Naive thymus-derived CD4-positive, alpha-beta T cell (primary cell): ENCODE measurements at regions of chr5 and their contacts with region 1.

Region 1: DNA sequence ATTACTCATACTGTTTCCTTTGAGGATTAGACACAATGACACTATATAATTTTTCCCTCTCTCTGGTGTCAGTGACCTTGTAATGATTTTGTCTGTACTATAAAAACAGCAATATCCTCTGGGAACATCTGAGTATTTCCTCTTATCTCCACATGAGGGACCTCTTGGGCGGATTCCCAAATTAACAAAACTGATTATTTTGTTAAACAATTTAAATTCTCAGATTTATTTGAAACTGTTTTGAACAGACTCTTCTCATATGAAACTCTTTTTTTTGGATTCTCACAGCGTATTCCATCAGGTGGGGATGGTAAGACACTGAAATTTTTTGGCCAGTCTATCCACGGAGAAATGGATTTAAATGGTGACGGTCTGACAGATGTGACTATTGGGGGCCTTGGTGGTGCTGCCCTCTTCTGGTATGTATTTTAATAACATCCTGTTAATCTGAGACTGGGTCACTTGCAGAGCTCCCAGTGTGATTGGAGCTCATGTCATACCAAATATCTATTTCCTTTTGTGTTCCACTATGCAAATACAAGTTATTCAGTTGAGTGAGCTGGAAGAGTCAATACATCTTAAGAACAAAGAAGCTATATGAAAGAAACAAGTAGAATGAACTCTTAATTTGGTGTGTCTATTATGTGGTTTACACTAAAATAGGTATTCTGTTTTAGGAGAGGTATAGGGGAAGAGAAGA is 73.8 kb upstream of the ITGA2 start:
- DNase-seq: peak in 8 of 9 donors; percentile 30 to 77 (median 69)
- ATAC-seq: peak; percentile 97
- H3K4me3 ChIP-seq: no peak overlapping the region
- H3K4me3 Mint-ChIP-seq: peak overlapping the region in 9 of 10 donors; percentile 19 to 79 (median 73)
- H3K27ac ChIP-seq: no peak overlapping the region
- H3K27ac Mint-ChIP-seq: peak overlapping the region in 2 of 9 donors; percentile 10 to 30
- H3K4me1 ChIP-seq: no peaks in the 10 kb centered on the region
- H3K4me1 Mint-ChIP-seq: peaks cover 5 to 9% (median 8%) of the 10 kb centered on the region in 7 donors
- H3K27me3 ChIP-seq: no peaks in the 10 kb centered on the region
- H3K27me3 Mint-ChIP-seq: peaks cover 0 to 9% (median 0%) of the 10 kb centered on the region in 5 donors

Region 2: GRCh38 chr5:52657247-52657645 is 258.1 kb before region 1 on chr5:
- CTCF ChIA-PET with region 1: interaction called, 3 read pairs
- POLR2A ChIA-PET with region 1: no interaction called
- intact Hi-C with region 1: loop called (anchors 2 kb)
- DNase-seq: peak in 6 of 9 donors; percentile 14 to 61 (median 50)
- ATAC-seq: peak; percentile 57
- H3K4me3 ChIP-seq: no peak overlapping the region
- H3K4me3 Mint-ChIP-seq: no peak overlapping the region
- H3K27ac ChIP-seq: no peak overlapping the region
- H3K27ac Mint-ChIP-seq: no peak overlapping the region
- H3K4me1 ChIP-seq: no peaks in the 10 kb centered on the region
- H3K4me1 Mint-ChIP-seq: peaks cover 0 to 6% (median 0%) of the 10 kb centered on the region in 7 donors
- H3K27me3 ChIP-seq: no peaks in the 10 kb centered on the region
- H3K27me3 Mint-ChIP-seq: peaks cover 7 to 40% (median 11%) of the 10 kb centered on the region in 5 donors

Region 3: GRCh38 chr5:52665559-52665958 is 249.8 kb before region 1 on chr5:
- CTCF ChIA-PET with region 1: interaction called, 6 read pairs
- POLR2A ChIA-PET with region 1: no interaction called
- intact Hi-C with region 1: loop called (anchors 1 to 2 kb)
- DNase-seq: no peak
- ATAC-seq: no peak
- H3K4me3 ChIP-seq: no peak overlapping the region
- H3K4me3 Mint-ChIP-seq: no peak overlapping the region
- H3K27ac ChIP-seq: no peak overlapping the region
- H3K27ac Mint-ChIP-seq: peak overlapping the region in 1 of 9 donors; percentile 32
- H3K4me1 ChIP-seq: no peaks in the 10 kb centered on the region
- H3K4me1 Mint-ChIP-seq: peaks cover 0 to 15% (median 4%) of the 10 kb centered on the region in 7 donors
- H3K27me3 ChIP-seq: no peaks in the 10 kb centered on the region
- H3K27me3 Mint-ChIP-seq: peaks cover 0 to 33% (median 0%) of the 10 kb centered on the region in 5 donors

Region 4: GRCh38 chr5:52693280-52693679 is 222.0 kb before region 1 on chr5:
- CTCF ChIA-PET with region 1: interaction called, 21 read pairs
- POLR2A ChIA-PET with region 1: no interaction called
- intact Hi-C with region 1: loop called (anchors 1 kb)
- DNase-seq: peak in 7 of 9 donors; percentile 10 to 27 (median 25)
- ATAC-seq: peak; percentile 48
- H3K4me3 ChIP-seq: no peak overlapping the region
- H3K4me3 Mint-ChIP-seq: no peak overlapping the region
- H3K27ac ChIP-seq: no peak overlapping the region
- H3K27ac Mint-ChIP-seq: peak overlapping the region in 2 of 9 donors; percentile 1 to 18
- H3K4me1 ChIP-seq: no peaks in the 10 kb centered on the region
- H3K4me1 Mint-ChIP-seq: peaks cover 0 to 17% (median 7%) of the 10 kb centered on the region in 7 donors
- H3K27me3 ChIP-seq: no peaks in the 10 kb centered on the region
- H3K27me3 Mint-ChIP-seq: peaks cover 0 to 26% (median 0%) of the 10 kb centered on the region in 5 donors

Region 5: DNA sequence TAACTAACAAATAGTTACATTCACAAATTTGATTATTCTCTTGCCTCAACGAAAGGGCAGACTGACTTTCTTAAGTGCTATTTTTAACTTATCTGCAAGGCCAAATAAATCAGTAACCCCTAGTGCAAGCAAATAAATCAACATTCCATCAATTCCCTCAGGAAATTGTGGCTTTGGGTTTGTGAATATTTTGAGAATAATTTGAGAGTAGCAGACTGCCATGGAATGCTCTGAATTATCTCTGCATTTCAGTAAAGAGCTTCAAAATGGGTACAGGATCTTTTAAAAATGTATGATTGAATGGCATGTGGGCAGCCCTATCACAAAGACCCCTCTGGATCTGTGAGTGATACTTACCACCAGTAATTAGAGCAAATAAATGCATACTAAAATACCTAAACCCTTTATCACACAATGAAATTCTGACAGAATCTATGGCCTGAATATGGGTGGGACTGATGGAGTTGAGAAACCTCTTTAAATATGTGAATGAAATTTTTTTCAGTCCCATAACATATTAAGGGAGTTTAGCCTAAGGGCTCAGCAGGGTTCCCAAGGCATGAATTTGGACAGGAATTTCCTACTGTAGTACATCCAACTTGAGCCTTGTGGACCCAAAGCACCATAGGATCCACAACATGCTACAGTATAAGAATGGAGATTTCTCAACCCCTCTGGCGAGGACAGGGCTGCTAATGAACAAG is 18.6 kb before region 1 on chr5:
- CTCF ChIA-PET with region 1: no interaction called
- POLR2A ChIA-PET with region 1: no interaction called
- intact Hi-C with region 1: no loop called
- DNase-seq: no peak
- ATAC-seq: no peak
- H3K4me3 ChIP-seq: no peak overlapping the region
- H3K4me3 Mint-ChIP-seq: no peak overlapping the region
- H3K27ac ChIP-seq: no peak overlapping the region
- H3K27ac Mint-ChIP-seq: no peak overlapping the region
- H3K4me1 ChIP-seq: peaks cover 0 to 8% of the 10 kb centered on the region in 2 donors
- H3K4me1 Mint-ChIP-seq: peaks cover 0 to 20% (median 14%) of the 10 kb centered on the region in 7 donors
- H3K27me3 ChIP-seq: no peaks in the 10 kb centered on the region
- H3K27me3 Mint-ChIP-seq: peaks cover 0 to 12% (median 0%) of the 10 kb centered on the region in 5 donors

Region 6: GRCh38 chr5:53343187-53343586 is 427.9 kb after region 1 on chr5:
- CTCF ChIA-PET with region 1: no interaction called
- POLR2A ChIA-PET with region 1: no interaction called
- intact Hi-C with region 1: no loop called
- DNase-seq: no peak
- ATAC-seq: no peak
- H3K4me3 ChIP-seq: no peak overlapping the region
- H3K4me3 Mint-ChIP-seq: no peak overlapping the region
- H3K27ac ChIP-seq: no peak overlapping the region
- H3K27ac Mint-ChIP-seq: no peak overlapping the region
- H3K4me1 ChIP-seq: no peaks in the 10 kb centered on the region
- H3K4me1 Mint-ChIP-seq: no peaks in the 10 kb centered on the region
- H3K27me3 ChIP-seq: no peaks in the 10 kb centered on the region
- H3K27me3 Mint-ChIP-seq: peaks cover 0 to 23% (median 5%) of the 10 kb centered on the region in 5 donors